ENCODE measurements at regions of chr12 and their contacts with region 1.

Region 1: DNA sequence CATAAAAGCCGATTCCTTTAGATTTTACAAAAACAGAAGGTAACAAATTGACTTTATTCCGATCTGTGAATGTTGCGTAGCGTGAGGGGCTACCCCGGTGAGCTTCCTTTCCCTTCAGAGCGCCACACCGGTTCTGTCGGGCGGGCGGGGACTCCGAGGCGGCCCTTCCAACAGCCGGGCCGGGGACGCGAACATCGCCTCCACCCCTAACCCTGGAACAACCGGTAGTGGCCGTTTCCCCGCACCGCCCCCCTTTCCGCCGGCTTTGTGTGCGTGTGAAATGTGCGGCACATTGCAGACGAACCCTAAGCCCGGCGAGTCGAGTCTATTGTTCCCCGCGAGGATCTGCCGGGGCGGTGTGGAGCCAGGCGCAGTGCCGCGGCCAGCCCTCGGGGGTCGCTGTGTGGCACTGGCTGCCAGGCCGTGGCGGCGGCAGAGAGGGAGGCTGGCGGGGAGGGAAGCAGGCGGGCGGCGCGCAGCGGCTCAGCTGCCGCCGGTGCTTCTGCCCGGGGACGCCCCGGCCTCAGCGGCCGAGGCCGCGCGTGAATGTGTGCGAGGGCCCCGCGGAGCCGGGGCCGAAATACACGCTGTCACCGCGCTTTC is 775 bp upstream of the ARID2 start:
- DNase-seq: peak; percentile 99
- H3K4me3 Mint-ChIP-seq: peak overlapping the region; percentile 91
- H3K27ac Mint-ChIP-seq: peak overlapping the region; percentile 99
- H3K4me1 Mint-ChIP-seq: peaks cover 27% of the 10 kb centered on the region
- H3K27me3 Mint-ChIP-seq: no peaks in the 10 kb centered on the region

Region 2: GRCh38 chr12:44847888-44848702 is 880.6 kb before region 1 on chr12:
- intact Hi-C with region 1: loop called (anchors 10 kb)
- DNase-seq: peak; percentile 89
- H3K4me3 Mint-ChIP-seq: peak overlapping the region; percentile 74
- H3K27ac Mint-ChIP-seq: peak overlapping the region; percentile 96
- H3K4me1 Mint-ChIP-seq: peaks cover 55% of the 10 kb centered on the region
- H3K27me3 Mint-ChIP-seq: no peaks in the 10 kb centered on the region

Region 3: GRCh38 chr12:45234139-45234846 is 494.4 kb before region 1 on chr12:
- intact Hi-C with region 1: loop called (anchors 5 kb)
- DNase-seq: no peak
- H3K4me3 Mint-ChIP-seq: peak overlapping the region; percentile 2
- H3K27ac Mint-ChIP-seq: peak overlapping the region; percentile 69
- H3K4me1 Mint-ChIP-seq: peaks cover 40% of the 10 kb centered on the region
- H3K27me3 Mint-ChIP-seq: no peaks in the 10 kb centered on the region

Region 4: GRCh38 chr12:45670346-45671065 is 58.2 kb before region 1 on chr12:
- intact Hi-C with region 1: loop called (anchors 1 kb)
- DNase-seq: peak; percentile 78
- H3K4me3 Mint-ChIP-seq: peak overlapping the region; percentile 10
- H3K27ac Mint-ChIP-seq: no peak overlapping the region
- H3K4me1 Mint-ChIP-seq: peaks cover 26% of the 10 kb centered on the region
- H3K27me3 Mint-ChIP-seq: peaks cover 7% of the 10 kb centered on the region

Region 5: GRCh38 chr12:45878630-45879255 is 150.0 kb after region 1 on chr12:
- intact Hi-C with region 1: no loop called
- DNase-seq: peak; percentile 78
- H3K4me3 Mint-ChIP-seq: peak overlapping the region; percentile 71
- H3K27ac Mint-ChIP-seq: peak overlapping the region; percentile 83
- H3K4me1 Mint-ChIP-seq: peaks cover 37% of the 10 kb centered on the region
- H3K27me3 Mint-ChIP-seq: no peaks in the 10 kb centered on the region

Region 6: GRCh38 chr12:45990468-45991283 is 261.9 kb after region 1 on chr12 and contains the start of gene SCAF11:
- intact Hi-C with region 1: loop called (anchors 1 kb)
- DNase-seq: peak; percentile 100
- H3K4me3 Mint-ChIP-seq: peak within 1 kb of the TSS; percentile 96
- H3K27ac Mint-ChIP-seq: peak within 1 kb of the TSS; percentile 99
- H3K4me1 Mint-ChIP-seq: peaks cover 42% of the 10 kb centered on the region
- H3K27me3 Mint-ChIP-seq: peaks cover 5% of the 10 kb centered on the region
- total RNA-seq, gene SCAF11: 126 and 140 TPM in 2 replicates

Region 7: GRCh38 chr12:47216150-47216677 is 1487.5 kb after region 1 on chr12:
- intact Hi-C with region 1: loop called (anchors 5 kb)
- DNase-seq: peak; percentile 93
- H3K4me3 Mint-ChIP-seq: peak overlapping the region; percentile 96
- H3K27ac Mint-ChIP-seq: peak overlapping the region; percentile 98
- H3K4me1 Mint-ChIP-seq: peaks cover 49% of the 10 kb centered on the region
- H3K27me3 Mint-ChIP-seq: no peaks in the 10 kb centered on the region